A549 (cell line): ENCODE measurements at regions of chr17 and their contacts with region 1.

Region 1: DNA sequence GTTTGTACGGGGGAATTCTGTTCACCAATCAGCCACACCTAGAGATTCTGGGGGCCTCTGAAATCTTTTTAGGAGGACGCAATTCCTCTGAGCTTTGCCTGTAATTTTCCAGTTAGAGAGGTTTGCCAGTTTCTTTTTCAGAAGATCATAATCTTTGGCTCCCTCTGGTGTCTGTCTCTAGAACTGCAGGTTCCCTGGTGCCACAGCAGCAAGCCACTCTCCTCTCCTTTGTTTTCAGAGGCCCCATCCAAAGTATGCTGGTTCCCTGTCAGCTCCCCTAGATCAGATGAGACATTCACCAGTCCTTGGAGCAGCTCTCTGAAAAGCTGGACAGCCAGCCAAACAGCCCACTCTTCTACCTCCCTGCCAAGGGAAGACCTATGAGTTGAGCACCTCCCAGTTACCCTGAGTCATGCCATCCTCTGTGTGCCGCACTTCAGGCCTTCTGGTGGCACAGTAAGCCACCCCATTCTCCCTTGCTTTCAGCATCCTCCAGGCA is 36.1 kb downstream of the RNF112 start:
- DNase-seq: peak; percentile 75 to 80
- ATAC-seq: peak; percentile 74 to 82
- H3K4me3 ChIP-seq: no peak overlapping the region
- H3K27ac ChIP-seq: peak overlapping the region; percentile 56 to 82
- H3K4me1 ChIP-seq: peaks cover 29% of the 10 kb centered on the region
- CTCF ChIP-seq: peak; percentile 97
- EP300 ChIP-seq: no peak
- POLR2A ChIP-seq: no peak
- RAD21 ChIP-seq: peak; percentile 95 to 96

Region 2: GRCh38 chr17:19370493-19370960 is 76.6 kb before region 1 on chr17:
- CTCF ChIA-PET with region 1: interaction called, 362 read pairs
- POLR2A ChIA-PET with region 1: no interaction called
- DNase-seq: no peak
- ATAC-seq: no peak
- H3K4me3 ChIP-seq: no peak overlapping the region
- H3K27ac ChIP-seq: no peak overlapping the region
- H3K4me1 ChIP-seq: peaks cover 14% of the 10 kb centered on the region
- CTCF ChIP-seq: no peak
- EP300 ChIP-seq: no peak
- POLR2A ChIP-seq: no peak
- RAD21 ChIP-seq: no peak

Region 3: DNA sequence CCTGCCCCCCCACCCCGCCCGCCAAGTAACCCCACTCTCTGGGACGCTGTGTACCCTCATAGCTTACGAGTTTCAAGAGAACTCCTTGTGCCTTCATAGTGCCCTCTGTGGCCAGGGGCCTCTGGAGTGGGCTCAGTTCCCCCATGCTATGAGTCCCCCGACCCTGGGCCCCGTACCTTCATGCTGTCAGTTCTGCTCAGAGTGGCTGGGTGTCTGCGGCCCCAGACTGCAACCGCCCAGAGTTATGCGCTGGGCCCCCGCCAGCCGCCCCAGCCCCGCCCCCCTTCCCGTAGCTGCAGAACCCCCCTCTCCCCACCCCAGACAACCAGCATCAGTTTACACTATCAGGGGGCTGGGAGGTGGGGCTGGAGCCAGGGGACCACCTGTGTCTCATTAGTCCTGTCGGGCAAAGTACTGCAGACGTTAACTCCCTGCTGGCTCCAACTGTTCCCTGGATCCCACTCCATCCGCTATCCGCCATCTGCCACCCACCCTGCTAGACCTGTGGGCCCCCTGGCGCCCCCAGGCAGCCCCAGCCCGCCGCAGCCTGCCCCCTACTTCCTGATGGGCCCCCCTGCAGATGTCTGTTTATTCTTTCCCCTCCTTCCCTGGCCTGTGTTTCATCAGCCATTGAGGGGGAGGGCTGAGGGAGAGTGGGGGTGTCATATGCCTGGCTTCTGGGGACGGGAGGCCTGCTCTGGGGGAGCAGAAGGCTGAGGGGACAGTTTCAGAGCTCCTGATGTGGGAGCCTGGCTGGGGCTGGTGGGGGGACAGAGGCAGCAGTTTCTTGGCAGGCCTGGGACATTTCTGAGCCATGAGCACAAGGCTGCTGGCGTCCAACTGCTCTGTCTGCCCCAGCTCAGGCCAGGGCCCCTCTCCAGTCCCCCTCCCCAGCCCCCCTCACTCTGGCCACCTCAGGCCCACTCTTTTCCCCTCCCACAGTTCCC is 59.9 kb before region 1 on chr17 and contains the start of gene MFAP4:
- CTCF ChIA-PET with region 1: interaction called, 44 read pairs
- POLR2A ChIA-PET with region 1: no interaction called
- DNase-seq: no peak
- ATAC-seq: peak in 1 of 2 experiments; percentile 17; a peak in 3 of 6 replicates
- H3K4me3 ChIP-seq: no peak within 1 kb of the TSS
- H3K27ac ChIP-seq: peak within 1 kb of the TSS; percentile 56 to 80
- H3K4me1 ChIP-seq: peaks cover 33% of the 10 kb centered on the region
- CTCF ChIP-seq: no peak
- EP300 ChIP-seq: no peak
- POLR2A ChIP-seq: no peak
- RAD21 ChIP-seq: no peak
- polyA plus RNA-seq, gene MFAP4: not detected in 2 replicates

Region 4: DNA sequence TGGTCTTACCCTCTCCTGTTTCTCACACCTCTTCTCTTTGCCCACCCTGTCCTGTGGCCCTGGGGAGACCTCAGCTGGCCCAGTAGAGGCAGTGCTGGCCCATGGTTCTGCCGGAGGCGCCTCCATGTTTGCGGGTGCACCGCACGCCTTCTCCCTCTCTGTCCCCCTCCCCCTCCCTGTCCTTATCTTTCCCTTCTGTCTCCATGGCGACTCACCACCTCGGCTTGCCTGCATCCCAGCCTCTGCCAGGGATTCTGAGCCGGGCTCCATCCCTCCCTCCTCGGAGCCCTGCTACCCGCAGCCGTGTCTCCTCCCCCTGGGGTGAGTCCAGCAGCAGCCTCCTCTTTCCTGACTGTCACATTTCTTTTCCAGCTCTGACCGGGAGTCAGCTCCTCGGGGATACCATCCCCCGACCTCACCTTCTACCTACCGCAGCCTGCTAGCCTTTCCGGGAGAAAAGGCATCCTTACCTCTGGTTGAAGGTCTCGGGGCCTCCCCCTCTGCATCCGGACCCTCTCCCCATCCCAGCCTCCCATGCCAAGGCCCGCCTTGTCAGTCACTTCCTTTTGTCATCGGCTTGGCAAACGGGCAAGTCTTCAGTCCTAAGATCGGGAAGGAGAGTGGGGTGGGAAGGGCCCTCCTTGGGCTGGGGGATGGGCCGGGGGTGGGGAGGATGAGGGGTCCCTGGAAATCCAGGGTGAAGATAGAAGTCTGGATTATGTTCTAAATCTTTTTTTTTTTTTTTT is 36.1 kb before region 1 on chr17 and contains the start of gene RNF112:
- CTCF ChIA-PET with region 1: interaction called, 58 read pairs
- POLR2A ChIA-PET with region 1: no interaction called
- DNase-seq: no peak
- ATAC-seq: peak in 1 of 2 experiments; percentile 23; a peak in 1 of 6 replicates
- H3K4me3 ChIP-seq: no peak within 1 kb of the TSS
- H3K27ac ChIP-seq: peak within 1 kb of the TSS in 1 of 2 experiments; percentile 34; a peak in 1 of 6 replicates
- H3K4me1 ChIP-seq: no peaks in the 10 kb centered on the region
- CTCF ChIP-seq: no peak
- EP300 ChIP-seq: no peak
- POLR2A ChIP-seq: no peak
- RAD21 ChIP-seq: no peak
- polyA plus RNA-seq, gene RNF112: 0.27 and 0.65 TPM in 2 replicates

Region 5: GRCh38 chr17:19424934-19425868 is 21.9 kb before region 1 on chr17:
- CTCF ChIA-PET with region 1: interaction called, 46 read pairs
- POLR2A ChIA-PET with region 1: no interaction called
- DNase-seq: no peak
- ATAC-seq: no peak
- H3K4me3 ChIP-seq: no peak overlapping the region
- H3K27ac ChIP-seq: no peak overlapping the region
- H3K4me1 ChIP-seq: peaks cover 13% of the 10 kb centered on the region
- CTCF ChIP-seq: no peak
- EP300 ChIP-seq: no peak
- POLR2A ChIP-seq: no peak
- RAD21 ChIP-seq: no peak

Region 6: GRCh38 chr17:19464031-19465026 is 17.2 kb after region 1 on chr17:
- CTCF ChIA-PET with region 1: interaction called, 88 read pairs
- POLR2A ChIA-PET with region 1: no interaction called
- DNase-seq: no peak
- ATAC-seq: no peak; a peak in 1 of 6 replicates
- H3K4me3 ChIP-seq: no peak overlapping the region
- H3K27ac ChIP-seq: no peak overlapping the region
- H3K4me1 ChIP-seq: no peaks in the 10 kb centered on the region
- CTCF ChIP-seq: no peak
- EP300 ChIP-seq: no peak
- POLR2A ChIP-seq: no peak
- RAD21 ChIP-seq: no peak